Activated CD8-positive, alpha-beta memory T cell treated with anti-CD3 and anti-CD28 coated beads, Interleukin-2, amount 10 ng/mL, durations not matched to agents 7 days and 5 days (primary cell): ENCODE measurements at regions of chr20 and their contacts with region 1.

Region 1: DNA sequence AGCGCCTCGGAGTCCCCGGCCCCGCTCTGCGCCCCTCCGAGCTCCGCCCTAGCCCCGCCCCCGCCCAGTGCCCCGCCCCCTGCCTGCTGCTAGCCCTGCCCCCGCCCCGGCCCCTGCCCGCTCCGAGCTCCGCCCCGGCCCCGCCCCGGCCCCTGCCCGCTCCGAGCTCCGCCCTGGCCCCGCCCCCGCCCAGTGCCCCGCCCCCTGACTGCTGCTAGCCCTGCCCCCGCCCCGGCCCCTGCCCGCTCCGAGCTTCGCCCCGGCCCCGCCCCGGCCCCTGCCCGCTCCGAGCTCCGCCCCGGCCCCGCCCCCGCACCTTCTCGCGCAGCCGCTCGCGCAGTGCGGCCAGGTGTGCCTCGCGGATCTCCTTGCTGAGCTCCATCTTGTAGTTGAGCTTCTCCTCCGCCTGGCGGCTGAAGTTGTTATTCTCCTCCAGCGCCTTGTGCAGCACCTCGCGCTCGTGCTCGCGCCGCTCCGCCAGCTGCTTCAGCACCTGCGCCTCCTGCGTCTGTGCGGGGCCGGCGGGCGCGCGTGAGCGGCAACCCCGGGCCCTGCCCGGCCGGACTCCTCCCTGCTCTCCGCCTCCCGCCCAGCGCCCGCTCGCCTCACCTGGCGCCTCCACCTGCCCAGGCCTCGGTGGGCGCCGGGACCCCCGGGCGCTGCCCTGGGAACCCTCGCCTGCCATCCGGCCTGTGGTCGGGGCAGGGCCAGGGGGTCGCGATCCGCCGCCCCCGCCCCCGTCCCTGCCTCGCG is 11.3 kb downstream of the STMN3 start:
- DNase-seq: peak; percentile 97
- ATAC-seq: peak; percentile 63
- H3K4me3 Mint-ChIP-seq: peak overlapping the region; percentile 64
- H3K27ac Mint-ChIP-seq: peak overlapping the region; percentile 80
- H3K4me1 Mint-ChIP-seq: peaks cover 27% of the 10 kb centered on the region
- H3K27me3 Mint-ChIP-seq: no peaks in the 10 kb centered on the region

Region 2: DNA sequence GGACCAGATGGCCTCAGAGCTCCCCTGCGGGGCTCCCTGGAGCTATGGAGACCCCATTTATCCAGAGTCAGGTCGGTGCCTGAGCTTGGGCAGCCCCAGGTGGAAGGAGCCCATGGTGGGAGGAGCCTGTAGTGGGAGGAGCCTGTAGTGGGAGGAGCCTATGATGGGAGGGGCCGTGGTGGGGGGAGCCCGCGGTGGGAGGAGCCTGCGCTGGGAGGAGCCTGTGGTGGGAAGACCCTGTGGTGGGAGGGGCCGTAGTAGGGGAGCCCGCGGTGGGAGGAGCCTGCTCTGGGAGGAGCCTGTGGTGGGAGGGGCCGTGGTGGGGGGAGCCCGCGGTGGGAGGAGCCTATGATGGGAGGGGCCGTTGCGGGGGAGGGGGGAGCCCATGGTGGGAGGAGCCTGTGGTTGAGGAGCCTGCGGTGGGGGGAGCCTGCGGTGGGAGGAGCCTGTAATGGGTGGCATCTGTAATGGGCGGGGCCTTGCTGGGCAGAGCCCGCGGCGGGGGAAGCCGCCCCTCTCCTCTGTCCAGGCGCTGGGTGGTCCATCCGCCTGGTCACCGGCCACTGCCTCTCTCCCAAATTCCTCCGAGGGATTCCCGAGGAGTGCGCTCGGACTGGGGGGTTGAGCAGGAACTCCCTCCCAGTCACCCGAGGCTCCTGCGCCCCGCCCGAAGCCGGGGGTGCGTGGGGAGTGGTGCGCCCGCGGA is 88.6 kb before region 1 on chr20:
- CTCF ChIA-PET with region 1: interaction called, 10 read pairs
- DNase-seq: peak; percentile 95
- ATAC-seq: peak; percentile 73
- H3K4me3 Mint-ChIP-seq: peak overlapping the region; percentile 38
- H3K27ac Mint-ChIP-seq: peak overlapping the region; percentile 86
- H3K4me1 Mint-ChIP-seq: peaks cover 14% of the 10 kb centered on the region
- H3K27me3 Mint-ChIP-seq: peaks cover 23% of the 10 kb centered on the region

Region 3: GRCh38 chr20:63615581-63615980 is 26.4 kb before region 1 on chr20:
- CTCF ChIA-PET with region 1: interaction called, 10 read pairs
- DNase-seq: no peak
- ATAC-seq: no peak
- H3K4me3 Mint-ChIP-seq: no peak overlapping the region
- H3K27ac Mint-ChIP-seq: no peak overlapping the region
- H3K4me1 Mint-ChIP-seq: peaks cover 3% of the 10 kb centered on the region
- H3K27me3 Mint-ChIP-seq: no peaks in the 10 kb centered on the region

Region 4: GRCh38 chr20:63627129-63627750 is 14.7 kb before region 1 on chr20:
- CTCF ChIA-PET with region 1: interaction called, 14 read pairs
- DNase-seq: peak; percentile 95
- ATAC-seq: peak; percentile 87
- H3K4me3 Mint-ChIP-seq: peak overlapping the region; percentile 95
- H3K27ac Mint-ChIP-seq: peak overlapping the region; percentile 92
- H3K4me1 Mint-ChIP-seq: peaks cover 22% of the 10 kb centered on the region
- H3K27me3 Mint-ChIP-seq: no peaks in the 10 kb centered on the region

Region 5: GRCh38 chr20:63657937-63658748 is 16.2 kb after region 1 on chr20 and contains the start of gene RTEL1:
- CTCF ChIA-PET with region 1: interaction called, 14 read pairs
- DNase-seq: peak; percentile 92
- ATAC-seq: peak; percentile 89
- H3K4me3 Mint-ChIP-seq: peak within 1 kb of the TSS; percentile 95
- H3K27ac Mint-ChIP-seq: peak within 1 kb of the TSS; percentile 93
- H3K4me1 Mint-ChIP-seq: peaks cover 36% of the 10 kb centered on the region
- H3K27me3 Mint-ChIP-seq: no peaks in the 10 kb centered on the region
- total RNA-seq, gene RTEL1: 50.0 to 53.6 TPM

Region 6: DNA sequence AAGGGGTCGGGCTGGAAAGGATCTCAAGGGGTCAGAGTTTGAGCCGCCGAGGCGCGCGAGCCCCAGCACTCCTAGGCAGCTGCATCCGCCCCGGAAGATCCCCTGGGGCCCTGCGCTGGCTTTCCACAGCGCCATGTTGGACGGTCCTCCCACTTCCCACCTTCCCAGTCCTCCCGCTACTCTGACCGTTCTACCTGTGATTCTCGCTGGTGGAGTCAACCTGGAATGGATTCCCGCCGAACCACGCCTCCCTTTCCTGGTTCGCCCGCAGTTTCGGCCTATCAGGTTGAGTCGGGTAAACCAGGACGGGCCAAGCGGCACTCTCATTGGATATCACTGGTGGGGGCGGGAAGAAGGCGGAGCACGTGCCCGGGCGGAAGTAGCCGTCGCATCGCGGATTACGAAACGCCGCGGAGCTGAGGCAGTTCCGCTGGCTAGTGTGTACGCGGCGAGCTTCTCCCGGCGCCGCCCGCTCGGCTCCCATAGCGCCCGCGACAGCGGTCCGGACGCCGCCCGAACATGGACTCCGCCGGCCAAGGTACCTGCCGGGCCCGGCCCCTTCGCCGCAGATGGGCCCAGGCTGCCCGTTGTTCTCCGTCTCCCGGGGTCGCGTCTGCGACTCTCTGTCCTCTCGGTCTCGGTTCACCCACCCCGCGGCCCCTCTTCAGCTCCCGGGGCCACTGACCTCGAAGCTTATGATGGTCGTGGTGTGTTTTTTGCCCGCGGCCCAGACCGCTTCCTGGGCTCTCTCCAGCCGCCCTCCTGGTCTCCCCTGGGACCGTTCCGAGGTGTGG is 223.1 kb after region 1 on chr20 and contains the start of gene TPD52L2:
- CTCF ChIA-PET with region 1: interaction called, 10 read pairs
- DNase-seq: peak; percentile 99
- ATAC-seq: peak; percentile 91
- H3K4me3 Mint-ChIP-seq: peak within 1 kb of the TSS; percentile 82
- H3K27ac Mint-ChIP-seq: peak within 1 kb of the TSS; percentile 84
- H3K4me1 Mint-ChIP-seq: peaks cover 24% of the 10 kb centered on the region
- H3K27me3 Mint-ChIP-seq: no peaks in the 10 kb centered on the region
- total RNA-seq, gene TPD52L2: 33.5 to 46.2 TPM